ENCODE measurements at regions of chr2 and their contacts with region 1.

Region 1: DNA sequence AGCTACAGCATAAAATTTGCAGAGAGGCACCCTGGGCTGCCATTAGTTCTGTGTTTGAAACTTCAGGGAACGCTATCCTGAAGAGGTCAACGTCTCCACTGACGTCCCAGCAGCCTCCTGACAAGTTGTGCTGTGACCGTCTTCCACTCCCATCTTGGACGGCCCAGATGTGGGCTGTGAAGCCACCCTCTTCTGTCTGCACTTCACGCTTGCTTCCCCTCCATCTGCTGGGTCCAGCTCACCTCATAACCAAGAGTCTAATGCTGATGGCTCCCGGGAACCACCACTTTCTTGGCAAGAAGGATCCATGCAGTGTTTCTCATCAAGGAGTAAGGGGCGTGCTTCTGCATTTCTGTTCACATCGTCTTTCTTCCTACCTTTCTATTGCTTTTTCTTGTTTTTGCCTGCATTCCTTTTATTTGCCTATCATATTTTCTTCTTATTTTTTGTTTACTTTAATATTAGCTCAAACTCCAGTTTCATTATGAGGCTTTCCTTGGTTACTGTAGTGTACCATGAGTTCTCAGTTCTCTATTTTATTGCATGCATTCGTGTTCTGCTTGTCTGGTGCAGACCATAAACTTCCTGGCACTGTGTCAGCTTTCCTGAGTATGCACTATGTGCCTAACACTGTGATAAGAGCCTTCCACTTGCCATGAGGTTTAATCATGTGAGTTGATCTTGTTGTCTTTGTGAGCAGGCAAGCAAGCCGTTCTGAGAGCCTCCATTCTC is 631.8 kb upstream of the RAB6C start:
- DNase-seq: no peak
- ATAC-seq: peak; percentile 94
- H3K4me3 Mint-ChIP-seq: peak overlapping the region; percentile 52
- H3K27ac Mint-ChIP-seq: peak overlapping the region; percentile 71
- H3K4me1 Mint-ChIP-seq: peaks cover 19% of the 10 kb centered on the region
- H3K27me3 Mint-ChIP-seq: no peaks in the 10 kb centered on the region
- CTCF ChIP-seq: no peak

Region 2: DNA sequence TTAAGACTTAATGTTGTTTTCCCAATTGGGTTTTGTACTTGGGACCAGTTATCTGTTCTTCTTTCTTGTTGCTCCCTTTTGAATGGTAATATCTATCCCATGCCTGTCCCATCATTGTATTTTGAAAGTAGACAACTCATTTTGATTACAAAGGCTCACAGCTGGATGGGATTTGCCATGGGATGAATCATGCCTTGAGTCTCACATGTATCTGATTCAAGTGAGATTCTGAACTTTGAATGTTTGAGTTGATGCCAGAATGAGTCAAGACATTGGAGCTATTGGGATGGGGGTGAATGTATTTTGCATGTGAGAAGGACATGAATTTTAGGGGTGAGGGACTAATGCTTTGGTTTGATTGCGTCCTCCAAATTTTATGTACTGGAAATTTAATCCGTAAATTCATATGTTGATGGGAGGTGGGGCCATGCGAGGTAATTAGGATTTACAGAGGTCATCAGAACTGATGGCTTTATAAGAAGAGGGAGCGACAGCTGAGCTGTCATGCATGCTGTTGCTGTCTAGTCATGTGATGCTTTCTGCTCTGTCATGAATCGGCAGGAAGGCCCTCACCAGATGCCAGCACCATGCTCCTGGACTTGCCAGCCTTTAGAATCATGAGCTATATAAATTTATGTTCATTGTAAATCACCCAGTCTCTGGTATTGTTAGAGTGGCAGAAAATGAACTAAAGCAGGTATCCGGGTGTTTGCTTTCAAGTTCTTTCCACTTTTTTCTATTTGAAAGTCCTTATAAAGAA is 109.5 kb before region 1 on chr2:
- CTCF ChIA-PET with region 1: no interaction called
- POLR2A ChIA-PET with region 1: no interaction called
- intact Hi-C with region 1: no loop called
- DNase-seq: no peak
- ATAC-seq: no peak
- H3K4me3 Mint-ChIP-seq: no peak overlapping the region
- H3K27ac Mint-ChIP-seq: no peak overlapping the region
- H3K4me1 Mint-ChIP-seq: no peaks in the 10 kb centered on the region
- H3K27me3 Mint-ChIP-seq: peaks cover 5% of the 10 kb centered on the region
- CTCF ChIP-seq: no peak

Region 3: GRCh38 chr2:129361717-129362116 is 14.1 kb after region 1 on chr2:
- CTCF ChIA-PET with region 1: no interaction called
- POLR2A ChIA-PET with region 1: no interaction called
- intact Hi-C with region 1: no loop called
- DNase-seq: no peak
- ATAC-seq: no peak
- H3K4me3 Mint-ChIP-seq: no peak overlapping the region
- H3K27ac Mint-ChIP-seq: no peak overlapping the region
- H3K4me1 Mint-ChIP-seq: no peaks in the 10 kb centered on the region
- H3K27me3 Mint-ChIP-seq: peaks cover 8% of the 10 kb centered on the region
- CTCF ChIP-seq: no peak

Region 4: GRCh38 chr2:129483366-129483765 is 135.7 kb after region 1 on chr2:
- CTCF ChIA-PET with region 1: no interaction called
- POLR2A ChIA-PET with region 1: no interaction called
- intact Hi-C with region 1: loop called (anchors 5 kb)
- DNase-seq: no peak
- ATAC-seq: peak; percentile 99
- H3K4me3 Mint-ChIP-seq: peak overlapping the region; percentile 61
- H3K27ac Mint-ChIP-seq: peak overlapping the region; percentile 91
- H3K4me1 Mint-ChIP-seq: peaks cover 35% of the 10 kb centered on the region
- H3K27me3 Mint-ChIP-seq: no peaks in the 10 kb centered on the region
- CTCF ChIP-seq: no peak

Region 5: GRCh38 chr2:130791608-130791922 is 1443.9 kb after region 1 on chr2:
- CTCF ChIA-PET with region 1: no interaction called
- POLR2A ChIA-PET with region 1: no interaction called
- intact Hi-C with region 1: no loop called
- DNase-seq: no peak
- ATAC-seq: no peak
- H3K4me3 Mint-ChIP-seq: no peak overlapping the region
- H3K27ac Mint-ChIP-seq: no peak overlapping the region
- H3K4me1 Mint-ChIP-seq: peaks cover 2% of the 10 kb centered on the region
- H3K27me3 Mint-ChIP-seq: peaks cover 6% of the 10 kb centered on the region
- CTCF ChIP-seq: no peak